ENCODE measurements at regions of chr2 and their contacts with region 1.

Region 1: GRCh38 chr2:84958135-84959044 is 12.6 kb upstream of the KCMF1 start:
- DNase-seq: peak; percentile 88 to 98
- H3K4me3 ChIP-seq: peak overlapping the region; percentile 27; the same call in 1 of the 2 replicates
- H3K27ac ChIP-seq: peak overlapping the region; percentile 99
- H3K4me1 ChIP-seq: peaks cover 49% of the 10 kb centered on the region
- H3K27me3 ChIP-seq: no peaks in the 10 kb centered on the region
- CTCF ChIP-seq: no peak

Region 2: DNA sequence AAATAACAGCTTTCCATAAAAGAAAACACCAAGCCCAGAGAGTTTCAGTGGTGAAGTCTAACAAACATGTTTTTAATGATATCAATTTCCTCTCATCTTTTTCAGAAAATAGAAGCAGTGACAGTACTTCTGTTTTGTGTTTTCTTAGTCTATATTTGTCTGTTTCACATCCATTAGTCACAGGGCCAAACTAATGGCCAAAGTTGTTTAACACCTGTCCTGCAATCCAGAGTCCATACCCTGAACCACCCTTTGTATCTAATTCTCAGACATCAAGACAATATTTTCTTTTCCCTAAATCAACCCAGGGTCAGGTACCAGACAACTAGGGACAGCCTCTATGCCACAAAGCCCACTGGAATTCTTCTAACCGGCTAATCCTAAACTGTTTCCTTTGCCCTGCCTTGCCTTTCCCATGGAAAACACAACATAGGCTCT is 27.0 kb before region 1 on chr2:
- CTCF ChIA-PET with region 1: interaction called, 15 read pairs
- POLR2A ChIA-PET with region 1: interaction called, 10 read pairs
- intact Hi-C with region 1: no loop called
- DNase-seq: no peak
- H3K4me3 ChIP-seq: no peak overlapping the region
- H3K27ac ChIP-seq: no peak overlapping the region
- H3K4me1 ChIP-seq: peaks cover 4% of the 10 kb centered on the region; the same call in 1 of the 2 replicates
- H3K27me3 ChIP-seq: no peaks in the 10 kb centered on the region
- CTCF ChIP-seq: no peak

Region 3: DNA sequence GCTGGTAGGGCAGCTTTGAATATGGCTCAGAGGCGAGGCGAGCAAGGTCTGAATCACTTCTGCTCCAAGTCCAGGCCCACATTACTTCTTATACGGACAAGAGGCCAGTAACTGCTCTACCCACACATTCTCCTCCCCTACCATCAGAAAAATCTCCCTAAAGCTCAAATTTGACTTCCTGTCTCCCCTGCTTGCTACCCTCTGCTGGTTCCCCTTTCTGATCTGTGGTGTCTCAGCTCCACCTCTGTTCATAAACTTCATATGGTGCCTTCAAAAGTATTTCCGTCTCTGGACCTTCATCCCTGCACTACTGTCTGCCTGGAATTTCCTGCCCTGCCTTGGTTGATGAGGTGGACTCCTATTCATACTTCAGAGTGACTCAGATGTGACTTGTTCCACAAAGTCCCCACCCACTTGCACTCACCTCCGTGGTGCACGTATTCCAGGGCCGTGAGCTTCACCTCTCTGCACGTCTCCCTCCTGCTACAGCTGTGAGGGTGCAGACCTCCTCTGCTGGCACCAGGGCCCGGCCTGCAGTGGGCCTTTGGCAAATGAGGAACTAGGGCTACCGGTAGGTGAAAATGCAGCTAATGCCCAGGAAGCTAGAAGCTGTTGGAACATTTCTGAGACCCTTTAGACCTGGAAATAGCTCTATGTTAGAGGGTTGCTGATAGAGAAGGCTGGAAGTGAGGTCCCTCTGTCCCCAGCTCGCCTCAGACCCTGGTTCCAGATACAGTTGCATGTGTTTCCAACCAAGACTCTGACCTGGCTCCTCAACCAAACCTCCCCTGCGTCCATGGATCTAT is 12.0 kb before region 1 on chr2:
- CTCF ChIA-PET with region 1: interaction called, 3 read pairs
- POLR2A ChIA-PET with region 1: interaction called, 30 read pairs
- intact Hi-C with region 1: loop called (anchors 1 kb)
- DNase-seq: peak; percentile 84 to 98
- H3K4me3 ChIP-seq: peak overlapping the region; percentile 27; the same call in 1 of the 2 replicates
- H3K27ac ChIP-seq: peak overlapping the region; percentile 94
- H3K4me1 ChIP-seq: peaks cover 52% of the 10 kb centered on the region
- H3K27me3 ChIP-seq: no peaks in the 10 kb centered on the region
- CTCF ChIP-seq: no peak

Region 4: DNA sequence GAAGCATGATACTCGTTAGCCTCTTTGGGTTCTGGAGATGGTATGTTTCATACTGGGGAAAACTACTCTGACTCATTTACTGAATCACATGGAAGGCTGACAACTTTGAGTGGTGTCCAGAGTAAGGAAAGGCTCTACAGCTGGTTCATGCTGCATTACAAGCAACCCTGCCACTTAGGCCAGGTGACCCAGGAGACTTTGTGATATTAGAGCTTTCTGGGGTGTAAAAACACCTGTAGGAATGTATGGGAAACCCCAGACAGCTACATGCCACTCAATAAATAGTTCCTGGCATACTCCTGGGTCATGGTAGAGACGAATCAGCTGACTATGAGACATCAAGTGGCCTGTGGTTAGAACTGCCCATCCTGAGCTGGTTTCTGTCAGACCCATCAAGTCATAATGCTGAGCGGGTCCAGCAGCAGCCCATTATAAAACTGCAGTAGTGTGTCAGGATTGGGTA is 153.5 kb after region 1 on chr2:
- CTCF ChIA-PET with region 1: no interaction called
- POLR2A ChIA-PET with region 1: no interaction called
- intact Hi-C with region 1: no loop called
- DNase-seq: no peak
- H3K4me3 ChIP-seq: no peak overlapping the region
- H3K27ac ChIP-seq: no peak overlapping the region
- H3K4me1 ChIP-seq: no peaks in the 10 kb centered on the region
- H3K27me3 ChIP-seq: no peaks in the 10 kb centered on the region
- CTCF ChIP-seq: no peak